Astrocyte of the cerebellum (primary cell): ENCODE measurements at regions of chr14 and their contacts with region 1.

Region 1: GRCh38 chr14:65095619-65096205 is 6.6 kb downstream of the MAX start:
- DNase-seq: peak; percentile 93
- H3K4me3 ChIP-seq: no peak overlapping the region
- CTCF ChIP-seq: no peak

Region 2: GRCh38 chr14:65054471-65055085 is 41.1 kb before region 1 on chr14:
- in situ Hi-C with region 1: loop called (anchors 5 kb)
- DNase-seq: no peak
- H3K4me3 ChIP-seq: no peak overlapping the region
- CTCF ChIP-seq: no peak

Region 3: GRCh38 chr14:65065700-65066099 is 30.0 kb before region 1 on chr14:
- in situ Hi-C with region 1: no loop called
- DNase-seq: no peak
- H3K4me3 ChIP-seq: no peak overlapping the region
- CTCF ChIP-seq: no peak